ENCODE measurements at regions of chr6 and their contacts with region 1.

Region 1: DNA sequence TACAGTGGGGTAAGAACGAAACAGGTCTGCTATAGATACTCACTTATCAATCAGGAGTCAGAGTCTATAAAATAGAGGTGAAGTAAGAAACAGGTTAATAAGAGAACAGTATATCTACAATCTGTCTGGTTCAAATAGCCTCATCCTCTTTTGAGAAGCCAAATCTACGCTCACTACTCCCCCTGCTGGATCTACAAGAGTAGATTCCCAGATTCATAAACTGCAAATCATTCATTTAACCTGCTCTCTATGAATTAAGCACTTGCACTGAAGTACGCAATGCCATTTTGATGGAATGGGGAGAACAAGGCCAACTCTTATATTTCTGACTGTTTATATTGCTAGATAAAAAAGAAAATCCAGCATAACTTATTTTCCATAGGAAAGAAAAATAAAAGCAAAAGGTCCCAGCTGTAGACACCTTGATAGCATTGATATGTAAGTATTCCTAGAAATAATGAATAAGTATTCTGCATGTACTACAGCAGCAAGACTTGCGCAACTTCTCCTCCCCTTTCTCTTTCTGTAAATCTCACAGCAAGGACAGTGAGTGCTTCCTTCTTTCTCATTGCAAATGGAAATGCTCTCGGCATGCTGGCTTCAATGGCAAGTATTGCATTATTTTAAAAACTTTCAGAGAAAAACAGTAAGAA is 92.3 kb downstream of the RFX6 start:
- DNase-seq: peak; percentile 33
- H3K4me3 Mint-ChIP-seq: no peak overlapping the region
- H3K27ac Mint-ChIP-seq: no peak overlapping the region
- H3K4me1 Mint-ChIP-seq: no peaks in the 10 kb centered on the region
- H3K27me3 Mint-ChIP-seq: peaks cover 15% of the 10 kb centered on the region

Region 2: DNA sequence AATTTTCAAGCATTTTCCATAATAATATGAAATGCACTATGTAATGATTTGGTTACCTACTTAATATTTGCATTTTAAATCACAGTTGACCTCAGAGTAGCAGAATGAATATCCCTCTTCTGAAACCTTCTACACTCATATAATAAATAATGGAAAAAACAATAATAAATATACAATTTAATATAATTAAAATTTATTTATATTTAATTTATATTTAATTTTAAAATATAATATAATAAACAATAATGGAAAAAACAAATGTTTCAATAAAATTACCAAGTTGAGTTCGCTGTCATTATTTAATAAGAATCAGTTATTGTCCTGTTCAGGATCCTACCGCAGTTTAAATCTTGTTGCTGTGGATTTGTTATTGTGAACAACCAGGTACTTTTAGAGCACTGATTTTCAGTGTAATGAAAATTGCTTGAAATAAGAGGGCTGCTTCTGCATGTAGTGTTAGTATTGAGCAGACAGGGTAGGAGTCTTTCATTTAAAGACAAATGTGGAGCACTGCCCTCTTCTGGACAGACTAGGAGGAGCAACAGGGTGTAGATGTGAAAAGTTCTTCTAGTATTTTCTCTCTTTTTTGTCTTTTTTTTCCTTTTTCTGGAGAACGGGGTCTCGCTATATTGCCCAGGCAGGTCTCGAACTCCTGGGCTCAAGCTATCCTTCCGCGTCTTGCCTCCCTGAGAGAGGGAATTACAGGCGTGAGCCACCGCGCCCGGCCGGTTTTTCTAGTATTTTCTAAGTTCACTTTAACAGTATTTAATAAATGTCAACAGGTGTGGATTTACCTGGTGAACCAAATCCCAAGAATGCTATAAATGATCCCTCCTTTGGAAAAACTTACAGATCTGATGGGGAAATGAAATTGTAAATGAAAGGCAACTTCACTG is 437.4 kb before region 1 on chr6:
- CTCF ChIA-PET with region 1: no interaction called
- intact Hi-C with region 1: loop called (anchors 1 kb)
- DNase-seq: peak; percentile 79
- H3K4me3 Mint-ChIP-seq: no peak overlapping the region
- H3K27ac Mint-ChIP-seq: no peak overlapping the region
- H3K4me1 Mint-ChIP-seq: no peaks in the 10 kb centered on the region
- H3K27me3 Mint-ChIP-seq: peaks cover 11% of the 10 kb centered on the region

Region 3: DNA sequence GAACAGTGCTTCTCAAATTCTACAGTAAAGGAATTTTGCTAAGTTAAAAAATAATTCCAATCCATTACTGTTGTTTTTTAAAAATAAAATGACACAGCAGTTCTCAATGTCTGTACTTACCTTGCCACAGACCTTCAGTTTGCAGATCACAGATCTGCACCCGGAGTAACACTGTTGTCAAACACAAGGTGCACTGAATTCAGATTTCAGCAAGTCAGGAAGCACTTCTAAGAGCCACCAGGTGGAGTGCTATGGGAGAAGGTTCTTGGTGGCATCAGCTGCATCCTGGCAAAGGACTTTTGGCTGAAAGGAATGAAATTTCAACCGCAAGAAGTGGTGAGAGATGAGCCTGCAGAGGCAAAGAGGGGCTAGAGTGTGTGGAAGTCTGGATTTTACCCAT is 335.7 kb before region 1 on chr6:
- CTCF ChIA-PET with region 1: no interaction called
- intact Hi-C with region 1: loop called (anchors 5 kb)
- DNase-seq: peak; percentile 11
- H3K4me3 Mint-ChIP-seq: no peak overlapping the region
- H3K27ac Mint-ChIP-seq: no peak overlapping the region
- H3K4me1 Mint-ChIP-seq: no peaks in the 10 kb centered on the region
- H3K27me3 Mint-ChIP-seq: no peaks in the 10 kb centered on the region

Region 4: DNA sequence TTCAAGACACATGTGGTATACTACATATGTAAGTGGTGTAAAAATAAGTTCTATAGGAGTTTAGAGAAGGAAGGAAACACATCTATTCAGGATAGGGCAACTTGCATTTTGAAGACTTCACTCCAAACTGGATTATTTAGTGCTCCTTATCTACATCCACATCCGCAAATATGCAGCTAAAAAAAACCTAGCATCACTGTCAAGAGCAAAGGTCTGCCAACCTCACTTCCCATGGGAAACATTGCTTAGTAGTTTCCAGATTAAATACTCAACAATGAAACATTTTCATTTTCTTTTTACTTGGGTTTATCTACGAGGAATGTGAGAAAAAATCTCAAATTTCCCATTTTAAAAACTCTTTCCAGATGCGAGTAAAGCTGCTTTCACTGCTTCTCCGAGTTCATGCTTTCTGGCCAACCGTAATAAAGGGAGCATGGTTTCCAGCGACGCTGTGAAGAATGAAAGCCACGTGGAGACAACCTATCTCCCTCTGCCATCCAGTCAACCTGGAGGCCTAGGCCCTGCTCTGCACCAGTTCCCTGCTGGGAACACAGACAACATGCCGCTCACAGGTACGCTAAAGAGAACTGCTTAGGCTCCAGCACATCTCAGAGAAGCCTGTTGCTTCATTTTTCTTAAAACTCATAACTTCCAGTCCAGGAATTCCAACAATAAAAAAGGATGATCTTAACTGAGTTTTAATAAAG is 44.1 kb before region 1 on chr6:
- CTCF ChIA-PET with region 1: no interaction called
- intact Hi-C with region 1: no loop called
- DNase-seq: no peak
- H3K4me3 Mint-ChIP-seq: no peak overlapping the region
- H3K27ac Mint-ChIP-seq: no peak overlapping the region
- H3K4me1 Mint-ChIP-seq: no peaks in the 10 kb centered on the region
- H3K27me3 Mint-ChIP-seq: peaks cover 3% of the 10 kb centered on the region

Region 5: GRCh38 chr6:117188627-117189201 is 219.4 kb after region 1 on chr6:
- CTCF ChIA-PET with region 1: no interaction called
- intact Hi-C with region 1: loop called (anchors 1 kb)
- DNase-seq: no peak
- H3K4me3 Mint-ChIP-seq: no peak overlapping the region
- H3K27ac Mint-ChIP-seq: no peak overlapping the region
- H3K4me1 Mint-ChIP-seq: no peaks in the 10 kb centered on the region
- H3K27me3 Mint-ChIP-seq: no peaks in the 10 kb centered on the region

Region 6: GRCh38 chr6:117317261-117317660 is 347.9 kb after region 1 on chr6:
- CTCF ChIA-PET with region 1: interaction called, 3 read pairs
- intact Hi-C with region 1: loop called (anchors 1 kb)
- DNase-seq: no peak
- H3K4me3 Mint-ChIP-seq: no peak overlapping the region
- H3K27ac Mint-ChIP-seq: no peak overlapping the region
- H3K4me1 Mint-ChIP-seq: no peaks in the 10 kb centered on the region
- H3K27me3 Mint-ChIP-seq: peaks cover 5% of the 10 kb centered on the region

Region 7: GRCh38 chr6:117555882-117556498 is 586.7 kb after region 1 on chr6:
- CTCF ChIA-PET with region 1: no interaction called
- intact Hi-C with region 1: loop called (anchors 5 kb)
- DNase-seq: peak; percentile 78
- H3K4me3 Mint-ChIP-seq: no peak overlapping the region
- H3K27ac Mint-ChIP-seq: no peak overlapping the region
- H3K4me1 Mint-ChIP-seq: peaks cover under 1% of the 10 kb centered on the region
- H3K27me3 Mint-ChIP-seq: peaks cover 2% of the 10 kb centered on the region

Region 8: GRCh38 chr6:117771403-117771802 is 802.1 kb after region 1 on chr6:
- CTCF ChIA-PET with region 1: no interaction called
- intact Hi-C with region 1: no loop called
- DNase-seq: no peak
- H3K4me3 Mint-ChIP-seq: no peak overlapping the region
- H3K27ac Mint-ChIP-seq: no peak overlapping the region
- H3K4me1 Mint-ChIP-seq: no peaks in the 10 kb centered on the region
- H3K27me3 Mint-ChIP-seq: peaks cover 5% of the 10 kb centered on the region

Measured in activated naive CD4-positive, alpha-beta T cell treated with anti-CD3 and anti-CD28 coated beads for 36 hours (primary cell).